ENCODE measurements at regions of chr16 and their contacts with region 1.

Region 1: GRCh38 chr16:31265329-31266245 is 5.8 kb downstream of the ITGAM start:
- DNase-seq: peak; percentile 91
- H3K4me3 Mint-ChIP-seq: peak overlapping the region; percentile 28
- H3K27ac Mint-ChIP-seq: peak overlapping the region; percentile 85
- H3K4me1 Mint-ChIP-seq: peaks cover 46% of the 10 kb centered on the region
- H3K27me3 Mint-ChIP-seq: peaks cover under 1% of the 10 kb centered on the region

Region 2: DNA sequence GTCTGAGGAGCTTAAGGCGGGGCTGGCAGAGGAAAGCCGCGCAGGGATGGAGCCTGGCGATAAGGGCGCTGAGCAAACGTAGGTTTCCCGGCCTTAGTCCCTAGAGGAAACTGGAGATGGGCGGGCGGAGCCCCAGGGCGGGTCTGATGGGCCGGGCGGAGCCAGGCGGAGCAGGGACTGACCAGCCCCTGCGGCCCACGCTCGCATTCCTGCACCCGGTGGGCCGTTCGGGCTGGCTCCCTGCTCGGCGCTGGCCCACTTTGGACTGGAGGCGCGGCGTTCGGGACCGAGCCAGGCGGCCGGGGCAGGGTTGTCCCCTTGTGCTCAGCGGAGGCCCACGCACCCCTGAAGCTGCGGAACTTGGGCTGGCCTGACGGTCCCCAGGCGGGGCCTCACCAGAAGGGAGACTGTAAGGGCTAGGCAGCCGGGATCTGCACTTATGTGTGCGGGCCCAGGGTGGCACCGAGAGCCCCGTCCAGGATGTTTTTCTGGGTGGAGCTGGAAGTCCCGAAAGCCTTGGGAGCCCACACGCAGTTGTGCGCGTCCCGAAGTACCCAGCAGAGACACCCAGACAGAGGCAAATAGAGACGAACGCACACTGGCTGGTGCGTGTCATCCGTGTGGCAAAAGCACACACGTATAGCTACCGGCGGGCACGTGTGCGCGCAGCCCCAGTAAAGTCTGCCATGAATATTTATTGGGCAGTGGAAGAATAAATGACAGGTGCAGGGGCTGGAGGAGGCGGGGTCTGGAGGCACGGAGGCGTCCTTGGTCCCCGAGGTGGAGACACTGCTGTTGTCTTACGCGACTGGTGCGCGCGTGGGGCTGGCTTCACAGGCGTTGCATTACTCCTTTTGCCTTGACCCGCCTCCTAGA is 50.1 kb before region 1 on chr16:
- CTCF ChIA-PET with region 1: no interaction called
- POLR2A ChIA-PET with region 1: no interaction called
- intact Hi-C with region 1: loop called (anchors 5 kb)
- DNase-seq: peak; percentile 32
- H3K4me3 Mint-ChIP-seq: peak overlapping the region; percentile 46
- H3K27ac Mint-ChIP-seq: no peak overlapping the region
- H3K4me1 Mint-ChIP-seq: peaks cover 21% of the 10 kb centered on the region
- H3K27me3 Mint-ChIP-seq: peaks cover 44% of the 10 kb centered on the region

Region 3: GRCh38 chr16:31253642-31254045 is 11.9 kb before region 1 on chr16:
- CTCF ChIA-PET with region 1: no interaction called
- POLR2A ChIA-PET with region 1: interaction called, 3 read pairs
- intact Hi-C with region 1: loop called (anchors 1 kb)
- DNase-seq: peak; percentile 78
- H3K4me3 Mint-ChIP-seq: peak overlapping the region; percentile 50
- H3K27ac Mint-ChIP-seq: peak overlapping the region; percentile 87
- H3K4me1 Mint-ChIP-seq: peaks cover 29% of the 10 kb centered on the region
- H3K27me3 Mint-ChIP-seq: peaks cover 3% of the 10 kb centered on the region

Measured in activated CD4-positive, alpha-beta memory T cell treated with anti-CD3 and anti-CD28 coated beads for 36 hours (primary cell).